ENCODE measurements at regions of chr10 and their contacts with region 1.

Region 1: GRCh38 chr10:36423821-36424248 is 701.6 kb upstream of the ANKRD30A start:
- DNase-seq: no peak
- H3K4me3 ChIP-seq: no peak overlapping the region
- H3K27ac ChIP-seq: no peak overlapping the region
- H3K27me3 ChIP-seq: no peaks in the 10 kb centered on the region
- CTCF ChIP-seq: no peak

Region 2: DNA sequence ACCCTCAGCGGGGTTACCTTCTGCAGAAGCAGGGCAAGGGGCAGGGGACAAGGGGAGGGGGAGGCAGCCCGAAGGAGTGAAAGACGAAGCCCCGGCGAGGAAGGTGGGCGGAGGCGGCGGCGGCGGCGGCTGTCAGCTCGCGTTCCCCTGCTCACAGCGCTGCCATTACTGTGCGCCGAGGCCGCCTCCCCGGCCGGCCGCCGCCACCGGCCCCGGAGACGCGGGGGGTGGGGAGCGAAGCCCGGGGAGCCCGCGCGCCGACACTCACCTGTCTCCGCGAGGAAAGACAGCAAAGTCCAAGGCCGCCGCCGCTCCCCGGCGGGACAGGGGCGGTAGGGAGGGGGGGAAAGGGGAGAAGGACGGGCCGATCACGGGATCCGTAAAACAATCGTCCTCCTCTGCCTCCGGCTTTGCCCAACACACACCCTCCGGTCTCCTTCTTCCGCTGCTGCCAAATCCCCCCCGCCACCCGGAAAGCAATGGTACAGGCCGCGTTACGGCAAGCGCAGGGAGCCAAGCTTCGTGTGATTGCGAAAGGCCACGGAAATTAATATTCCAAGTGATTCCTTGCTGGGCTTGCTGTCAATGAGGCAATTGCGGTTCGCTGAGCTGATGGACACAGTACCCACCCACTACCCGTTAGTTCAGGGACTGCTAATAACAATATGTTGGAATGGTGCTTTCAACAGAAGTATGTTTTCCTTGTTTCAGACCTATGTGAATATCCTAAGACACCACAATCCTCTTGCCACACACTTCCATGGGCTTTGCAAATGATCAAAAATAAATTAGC is 1333.5 kb before region 1 on chr10 and contains the start of gene CUL2:
- CTCF ChIA-PET with region 1: interaction called, 14 read pairs
- POLR2A ChIA-PET with region 1: no interaction called
- DNase-seq: peak; percentile 92
- H3K4me3 ChIP-seq: peak within 1 kb of the TSS; percentile 76
- H3K27ac ChIP-seq: peak within 1 kb of the TSS; percentile 75
- H3K27me3 ChIP-seq: no peaks in the 10 kb centered on the region
- CTCF ChIP-seq: no peak
- polyA plus RNA-seq, gene CUL2: 27.3 and 37.9 TPM in 2 replicates

Region 3: DNA sequence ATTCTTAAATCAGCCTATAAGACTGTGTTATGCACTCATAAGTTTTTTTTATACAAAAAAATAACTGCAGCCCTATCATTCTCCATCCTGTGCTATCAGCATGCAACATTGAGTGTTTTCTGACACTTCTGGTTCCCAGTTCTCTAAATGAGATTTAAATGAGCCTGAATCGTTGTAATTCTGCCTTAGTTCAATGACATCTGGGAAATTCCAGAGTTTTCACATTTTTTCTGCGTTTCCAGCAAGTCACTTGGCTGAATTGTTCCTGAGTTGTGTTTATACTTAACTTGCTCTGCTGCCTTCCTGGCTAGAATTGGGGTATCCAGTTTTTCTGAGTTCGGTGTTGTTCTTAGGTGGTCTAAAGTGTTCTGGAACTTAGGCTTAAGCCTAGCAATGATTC is 145.7 kb before region 1 on chr10:
- CTCF ChIA-PET with region 1: no interaction called
- POLR2A ChIA-PET with region 1: no interaction called
- DNase-seq: no peak
- H3K4me3 ChIP-seq: no peak overlapping the region
- H3K27ac ChIP-seq: no peak overlapping the region
- H3K27me3 ChIP-seq: no peaks in the 10 kb centered on the region
- CTCF ChIP-seq: no peak

Measured in AG04450 (cell line).